IMR-90 (cell line): ENCODE measurements at regions of chr17 and their contacts with region 1.

Region 1: GRCh38 chr17:57987580-57988421 is at the start of gene VEZF1:
- DNase-seq: peak; percentile 44
- ATAC-seq: peak; percentile 60
- H3K4me3 ChIP-seq: peak within 1 kb of the TSS; percentile 99
- H3K27ac ChIP-seq: peak within 1 kb of the TSS; percentile 90
- H3K4me1 ChIP-seq: peaks cover 23% of the 10 kb centered on the region
- H3K27me3 ChIP-seq: no peaks in the 10 kb centered on the region
- CTCF ChIP-seq: no peak
- POLR2A ChIP-seq: no peak; the same call in none of the 2 replicates
- RAD21 ChIP-seq: no peak
- total RNA-seq, gene VEZF1: 40.3 and 42.1 TPM in 2 replicates

Region 2: DNA sequence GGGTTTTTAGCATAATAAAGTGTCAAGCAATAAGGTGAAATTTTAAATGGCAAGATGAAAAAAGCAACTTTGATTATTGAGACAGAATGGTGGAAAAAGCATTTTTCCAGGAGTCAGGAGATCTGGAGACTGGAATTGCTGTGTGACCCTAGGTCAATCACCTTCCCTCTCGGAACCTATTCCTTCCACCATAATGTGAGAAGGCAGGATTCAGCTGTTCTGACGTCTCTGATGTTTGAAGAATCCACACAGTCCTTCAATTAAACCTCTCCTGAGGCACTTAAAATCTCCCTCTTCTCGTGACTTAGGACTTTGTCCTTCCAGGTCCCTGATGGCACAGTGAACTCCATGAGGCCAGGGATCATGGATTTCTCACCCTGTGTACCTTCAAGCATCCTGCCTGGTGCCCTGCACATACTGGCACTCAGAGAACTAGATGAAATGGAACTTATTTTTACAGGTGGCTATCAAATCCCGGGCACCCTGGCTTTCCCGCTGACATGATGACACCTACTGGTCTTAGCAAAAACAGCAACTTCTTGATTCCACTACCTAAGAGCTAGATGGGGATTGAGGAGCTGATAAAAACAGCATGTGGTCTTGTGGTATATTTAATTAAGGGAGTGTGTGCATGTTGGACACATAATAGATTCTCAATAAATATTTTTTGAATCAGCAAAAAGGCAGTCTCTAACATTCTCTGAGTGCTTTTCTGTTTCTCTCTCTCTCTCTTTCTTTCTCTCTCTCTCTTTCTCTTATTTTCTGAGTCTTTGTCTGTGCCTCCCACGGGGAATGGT is 240.4 kb before region 1 on chr17:
- CTCF ChIA-PET with region 1: no interaction called
- POLR2A ChIA-PET with region 1: no interaction called
- dilution Hi-C with region 1: no loop called
- in situ Hi-C with region 1: no loop called
- intact Hi-C with region 1: no loop called
- DNase-seq: peak; percentile 73
- ATAC-seq: peak; percentile 93
- H3K4me3 ChIP-seq: no peak overlapping the region
- H3K27ac ChIP-seq: no peak overlapping the region
- H3K4me1 ChIP-seq: no peaks in the 10 kb centered on the region
- H3K27me3 ChIP-seq: peaks cover 38% of the 10 kb centered on the region
- CTCF ChIP-seq: peak; percentile 91
- POLR2A ChIP-seq: no peak
- RAD21 ChIP-seq: peak; percentile 91

Region 3: DNA sequence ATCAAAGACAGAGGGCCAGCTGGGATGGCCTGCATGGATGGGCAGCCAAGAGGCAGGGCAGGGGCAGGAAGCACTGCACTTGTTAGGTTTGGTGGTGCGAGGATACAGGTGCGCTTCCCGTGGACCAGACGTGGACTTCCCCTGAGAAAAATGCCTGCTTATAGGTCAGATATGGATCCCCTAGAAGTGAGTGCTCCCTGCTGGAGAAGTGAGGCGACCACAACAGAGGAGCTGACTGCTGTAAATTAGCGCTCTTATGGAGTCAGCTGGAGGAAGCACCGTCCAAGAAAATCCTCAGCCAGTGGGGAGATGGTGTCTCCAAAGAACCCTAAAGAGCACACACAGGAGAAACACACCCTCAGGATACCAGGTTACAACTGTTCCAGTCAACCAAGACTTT is 215.0 kb before region 1 on chr17:
- CTCF ChIA-PET with region 1: no interaction called
- POLR2A ChIA-PET with region 1: no interaction called
- dilution Hi-C with region 1: no loop called
- in situ Hi-C with region 1: no loop called
- intact Hi-C with region 1: no loop called
- DNase-seq: no peak
- ATAC-seq: no peak
- H3K4me3 ChIP-seq: no peak overlapping the region
- H3K27ac ChIP-seq: no peak overlapping the region
- H3K4me1 ChIP-seq: no peaks in the 10 kb centered on the region
- H3K27me3 ChIP-seq: peaks cover 45% of the 10 kb centered on the region
- CTCF ChIP-seq: no peak
- POLR2A ChIP-seq: no peak
- RAD21 ChIP-seq: no peak

Region 4: GRCh38 chr17:57948555-57949428 is 39.0 kb before region 1 on chr17:
- CTCF ChIA-PET with region 1: interaction called, 4 read pairs
- POLR2A ChIA-PET with region 1: interaction called, 3 read pairs
- dilution Hi-C with region 1: no loop called
- in situ Hi-C with region 1: no loop called
- intact Hi-C with region 1: loop called (anchors 2 kb)
- DNase-seq: peak; percentile 96
- ATAC-seq: peak; percentile 79
- H3K4me3 ChIP-seq: no peak overlapping the region; the same call in 1 of the 2 replicates
- H3K27ac ChIP-seq: peak overlapping the region; percentile 90
- H3K4me1 ChIP-seq: peaks cover 33% of the 10 kb centered on the region
- H3K27me3 ChIP-seq: no peaks in the 10 kb centered on the region
- CTCF ChIP-seq: no peak; the same call in 1 of the 2 replicates
- POLR2A ChIP-seq: peak; percentile 32; the same call in 1 of the 2 replicates
- RAD21 ChIP-seq: peak; percentile 15; the same call in 1 of the 2 replicates

Region 5: DNA sequence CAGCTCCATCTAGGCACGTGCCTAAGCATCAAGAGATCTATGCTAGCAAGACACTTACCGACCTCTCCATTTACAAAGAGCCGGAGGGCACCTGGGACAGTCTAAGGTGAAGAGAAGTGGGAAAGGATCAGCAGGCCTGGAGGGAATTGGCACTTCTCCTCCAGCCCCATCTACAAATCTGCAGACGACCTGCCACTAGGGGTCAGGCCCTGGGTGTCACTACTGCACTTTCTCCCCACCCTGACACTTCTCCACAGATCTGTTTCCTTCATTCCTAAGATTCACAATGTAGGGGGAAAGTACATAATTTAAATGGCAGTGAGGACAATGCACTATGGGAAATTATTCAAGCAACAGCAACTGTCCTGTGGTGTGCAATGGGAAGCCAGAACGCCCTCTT is 223.1 kb after region 1 on chr17:
- CTCF ChIA-PET with region 1: no interaction called
- POLR2A ChIA-PET with region 1: no interaction called
- dilution Hi-C with region 1: no loop called
- in situ Hi-C with region 1: no loop called
- intact Hi-C with region 1: no loop called
- DNase-seq: no peak
- ATAC-seq: no peak
- H3K4me3 ChIP-seq: no peak overlapping the region
- H3K27ac ChIP-seq: no peak overlapping the region
- H3K4me1 ChIP-seq: no peaks in the 10 kb centered on the region
- H3K27me3 ChIP-seq: no peaks in the 10 kb centered on the region
- CTCF ChIP-seq: no peak
- POLR2A ChIP-seq: no peak
- RAD21 ChIP-seq: no peak